GM12878 (cell line): ENCODE measurements at regions of chr10 and their contacts with region 1.

Region 1: GRCh38 chr10:11611248-11612020 is at the start of gene USP6NL:
- DNase-seq: no peak
- ATAC-seq: peak; percentile 54
- H3K4me3 ChIP-seq: peak within 1 kb of the TSS; percentile 98
- H3K27ac ChIP-seq: peak within 1 kb of the TSS; percentile 91
- H3K4me1 ChIP-seq: peaks cover 10% of the 10 kb centered on the region
- H3K27me3 ChIP-seq: no peaks in the 10 kb centered on the region
- CTCF ChIP-seq: no peak
- EP300 ChIP-seq: peak in 1 of 2 experiments; percentile 36; a peak in 1 of 4 replicates
- POLR2A ChIP-seq: peak; percentile 74
- RAD21 ChIP-seq: no peak
- polyA plus RNA-seq, gene USP6NL: 4.0 to 6.5 TPM

Region 2: DNA sequence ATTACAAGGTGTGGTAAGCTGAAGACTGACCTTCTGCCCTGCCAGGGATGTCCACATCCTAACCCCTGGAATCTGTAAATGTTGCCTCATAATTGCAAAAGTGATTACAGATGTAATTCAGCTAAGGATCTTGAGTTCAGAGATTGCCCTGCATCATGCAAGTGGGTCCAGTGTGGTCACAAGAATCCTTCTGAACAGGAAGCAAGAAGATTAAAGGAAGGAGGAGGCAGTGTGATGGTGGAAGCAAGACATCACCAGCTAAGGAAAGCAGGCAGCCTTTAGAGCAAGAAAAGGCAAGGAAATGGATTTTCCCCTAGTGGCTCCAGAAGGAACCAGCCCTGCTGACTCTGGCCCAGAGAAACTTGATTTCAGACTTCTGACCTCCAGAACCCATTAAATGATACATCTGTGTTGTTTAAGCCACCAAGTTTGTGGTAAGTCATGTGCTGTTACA is 78.1 kb before region 1 on chr10:
- CTCF ChIA-PET with region 1: interaction called, 5 read pairs
- POLR2A ChIA-PET with region 1: no interaction called
- RAD21 ChIA-PET with region 1: interaction called, 24 read pairs
- SMC1A ChIA-PET with region 1: interaction called, 15 read pairs
- in situ Hi-C with region 1: no loop called
- intact Hi-C with region 1: no loop called
- DNase-seq: no peak
- ATAC-seq: peak; percentile 27
- H3K4me3 ChIP-seq: 0 out of 2 replicates have a peak overlapping the region, but pooled peaks have one; percentile 0
- H3K27ac ChIP-seq: peak overlapping the region; percentile 90
- H3K4me1 ChIP-seq: peaks cover 44% of the 10 kb centered on the region
- H3K27me3 ChIP-seq: no peaks in the 10 kb centered on the region
- CTCF ChIP-seq: peak in 1 of 3 experiments; percentile 35; a peak in 1 of 6 replicates
- EP300 ChIP-seq: no peak
- POLR2A ChIP-seq: no peak
- RAD21 ChIP-seq: no peak

Region 3: GRCh38 chr10:11573497-11573896 is 37.9 kb before region 1 on chr10:
- CTCF ChIA-PET with region 1: interaction called, 3 read pairs
- POLR2A ChIA-PET with region 1: no interaction called
- RAD21 ChIA-PET with region 1: interaction called, 32 read pairs
- SMC1A ChIA-PET with region 1: interaction called, 27 read pairs
- in situ Hi-C with region 1: no loop called
- intact Hi-C with region 1: no loop called
- DNase-seq: peak; percentile 49
- ATAC-seq: peak; percentile 82
- H3K4me3 ChIP-seq: peak overlapping the region; percentile 53
- H3K27ac ChIP-seq: peak overlapping the region; percentile 77
- H3K4me1 ChIP-seq: peaks cover 27% of the 10 kb centered on the region
- H3K27me3 ChIP-seq: no peaks in the 10 kb centered on the region
- CTCF ChIP-seq: no peak
- EP300 ChIP-seq: no peak
- POLR2A ChIP-seq: no peak
- RAD21 ChIP-seq: no peak

Region 4: GRCh38 chr10:11625019-11625735 is 13.7 kb after region 1 on chr10:
- CTCF ChIA-PET with region 1: no interaction called
- POLR2A ChIA-PET with region 1: interaction called, 4 read pairs
- RAD21 ChIA-PET with region 1: interaction called, 3 read pairs
- SMC1A ChIA-PET with region 1: interaction called, 24 read pairs
- in situ Hi-C with region 1: no loop called
- intact Hi-C with region 1: no loop called
- DNase-seq: peak; percentile 56
- ATAC-seq: peak; percentile 93
- H3K4me3 ChIP-seq: 0 out of 2 replicates have a peak overlapping the region, but pooled peaks have one; percentile 41
- H3K27ac ChIP-seq: peak overlapping the region; percentile 32; the same call in 1 of the 2 replicates
- H3K4me1 ChIP-seq: peaks cover 20% of the 10 kb centered on the region
- H3K27me3 ChIP-seq: no peaks in the 10 kb centered on the region
- CTCF ChIP-seq: no peak
- EP300 ChIP-seq: no peak
- POLR2A ChIP-seq: no peak
- RAD21 ChIP-seq: no peak

Region 5: GRCh38 chr10:11684717-11685645 is 73.5 kb after region 1 on chr10:
- CTCF ChIA-PET with region 1: interaction called, 8 read pairs
- POLR2A ChIA-PET with region 1: interaction called, 12 read pairs
- RAD21 ChIA-PET with region 1: interaction called, 32 read pairs
- SMC1A ChIA-PET with region 1: interaction called, 57 read pairs
- in situ Hi-C with region 1: no loop called
- intact Hi-C with region 1: loop called (anchors 2 kb)
- DNase-seq: peak; percentile 94
- ATAC-seq: peak; percentile 83
- H3K4me3 ChIP-seq: peak overlapping the region; percentile 58
- H3K27ac ChIP-seq: peak overlapping the region; percentile 100
- H3K4me1 ChIP-seq: peaks cover 51% of the 10 kb centered on the region
- H3K27me3 ChIP-seq: no peaks in the 10 kb centered on the region
- CTCF ChIP-seq: no peak
- EP300 ChIP-seq: peak; percentile 66 to 68; a peak in 2 of 4 replicates
- POLR2A ChIP-seq: peak; percentile 79
- RAD21 ChIP-seq: peak; percentile 29

Region 6: DNA sequence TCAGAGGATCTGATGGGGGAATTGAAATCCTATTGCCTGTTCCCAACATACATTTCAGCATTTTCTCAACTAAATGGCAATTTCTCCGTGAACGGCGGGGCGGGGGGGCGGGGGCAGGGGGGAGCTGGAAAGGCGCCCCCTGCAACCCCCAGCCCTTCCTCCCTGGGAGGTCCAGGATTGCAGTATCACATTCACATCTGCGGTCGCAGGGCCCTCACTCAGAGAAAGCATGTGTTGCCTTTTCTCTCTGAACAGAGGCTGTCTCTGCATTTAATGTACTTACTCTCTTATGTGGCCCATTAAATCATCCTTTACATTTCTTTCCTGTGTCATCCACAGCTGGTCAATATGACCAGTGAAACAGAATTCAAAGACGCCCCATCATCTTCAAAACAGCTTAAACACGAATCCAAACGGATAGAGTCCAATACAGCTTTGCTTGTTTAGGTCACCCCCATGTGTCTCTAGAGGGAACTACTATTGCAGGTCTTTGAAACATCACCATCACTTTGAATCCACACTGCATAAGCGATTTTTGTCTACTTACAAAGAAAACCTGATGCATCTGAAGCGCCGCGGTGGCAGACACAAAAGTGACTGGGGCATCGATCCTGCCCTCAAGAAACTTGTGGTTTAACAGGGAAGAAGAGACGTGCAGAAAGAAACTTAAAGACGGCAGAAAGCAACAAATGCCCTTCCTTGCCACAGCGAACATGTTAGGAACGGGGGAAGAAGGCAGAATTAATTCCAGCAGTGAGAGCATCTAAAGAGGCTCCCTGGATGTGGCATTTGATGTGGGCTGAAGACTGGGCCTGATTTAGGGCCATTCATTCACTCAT is 113.7 kb after region 1 on chr10:
- CTCF ChIA-PET with region 1: interaction called, 5 read pairs
- POLR2A ChIA-PET with region 1: no interaction called
- RAD21 ChIA-PET with region 1: interaction called, 9 read pairs
- SMC1A ChIA-PET with region 1: interaction called, 13 read pairs
- in situ Hi-C with region 1: no loop called
- intact Hi-C with region 1: no loop called
- DNase-seq: peak; percentile 60
- ATAC-seq: peak; percentile 98
- H3K4me3 ChIP-seq: no peak overlapping the region
- H3K27ac ChIP-seq: no peak overlapping the region
- H3K4me1 ChIP-seq: peaks cover 3% of the 10 kb centered on the region
- H3K27me3 ChIP-seq: no peaks in the 10 kb centered on the region; a peak in 2 of 4 replicates
- CTCF ChIP-seq: peak; percentile 81 to 92 (median 90)
- EP300 ChIP-seq: no peak
- POLR2A ChIP-seq: no peak
- RAD21 ChIP-seq: peak; percentile 100

Region 7: GRCh38 chr10:11849908-11850307 is 238.5 kb after region 1 on chr10:
- CTCF ChIA-PET with region 1: no interaction called
- POLR2A ChIA-PET with region 1: no interaction called
- RAD21 ChIA-PET with region 1: no interaction called
- SMC1A ChIA-PET with region 1: no interaction called
- in situ Hi-C with region 1: no loop called
- intact Hi-C with region 1: no loop called
- DNase-seq: no peak
- ATAC-seq: no peak
- H3K4me3 ChIP-seq: no peak overlapping the region
- H3K27ac ChIP-seq: no peak overlapping the region
- H3K4me1 ChIP-seq: no peaks in the 10 kb centered on the region
- H3K27me3 ChIP-seq: no peaks in the 10 kb centered on the region; a peak in 1 of 4 replicates
- CTCF ChIP-seq: no peak
- EP300 ChIP-seq: no peak
- POLR2A ChIP-seq: no peak
- RAD21 ChIP-seq: no peak

Region 8: DNA sequence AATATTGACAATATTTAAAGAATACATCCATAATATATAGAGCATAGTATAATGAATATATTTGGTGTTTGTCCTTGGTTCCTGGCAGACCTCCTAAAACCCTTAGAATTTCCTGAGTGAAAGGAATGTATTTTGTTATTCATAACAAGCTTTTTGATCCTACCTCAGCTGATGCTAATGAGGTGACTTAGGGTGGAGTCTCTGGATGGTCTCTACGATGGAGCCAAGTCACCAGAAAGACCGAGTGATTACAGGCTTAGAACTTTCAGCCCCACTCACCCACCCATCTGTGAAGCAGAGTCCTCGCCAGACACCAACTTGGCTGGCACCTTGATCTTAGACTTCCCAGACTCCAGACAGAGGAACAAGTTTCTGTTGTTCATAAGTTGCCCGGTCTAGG is 395.2 kb after region 1 on chr10:
- CTCF ChIA-PET with region 1: no interaction called
- POLR2A ChIA-PET with region 1: no interaction called
- RAD21 ChIA-PET with region 1: no interaction called
- SMC1A ChIA-PET with region 1: no interaction called
- in situ Hi-C with region 1: no loop called
- intact Hi-C with region 1: no loop called
- DNase-seq: no peak
- ATAC-seq: no peak
- H3K4me3 ChIP-seq: no peak overlapping the region
- H3K27ac ChIP-seq: no peak overlapping the region
- H3K4me1 ChIP-seq: no peaks in the 10 kb centered on the region
- H3K27me3 ChIP-seq: no peaks in the 10 kb centered on the region
- CTCF ChIP-seq: no peak
- EP300 ChIP-seq: no peak
- POLR2A ChIP-seq: no peak
- RAD21 ChIP-seq: no peak